MCF 10A (cell line): ENCODE measurements at regions of chr1 and their contacts with region 1.

Region 1: DNA sequence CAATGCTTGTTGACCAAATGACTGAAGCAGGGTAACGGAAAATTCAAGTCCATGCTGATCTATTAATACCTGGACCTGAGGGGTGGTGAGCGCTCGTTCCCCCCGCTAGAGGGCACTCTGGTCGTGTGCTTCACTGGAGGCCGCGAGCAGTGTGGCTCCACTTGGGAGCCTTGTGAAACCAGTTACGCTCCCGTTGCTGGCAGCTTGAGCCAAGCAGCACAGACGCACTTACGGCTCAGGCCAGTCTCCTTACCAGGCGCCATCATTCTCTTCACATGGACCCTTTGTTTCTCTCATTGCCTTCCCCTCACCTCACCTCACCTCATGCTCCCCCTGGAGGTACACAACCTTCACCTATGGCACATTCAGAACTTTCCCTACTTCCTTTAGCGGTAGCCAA is 49.7 kb upstream of the TSPAN2 start:
- DNase-seq: peak; percentile 90
- H3K4me3 Mint-ChIP-seq: no peak overlapping the region
- H3K27ac Mint-ChIP-seq: no peak overlapping the region
- H3K4me1 Mint-ChIP-seq: peaks cover 38% of the 10 kb centered on the region
- H3K27me3 Mint-ChIP-seq: no peaks in the 10 kb centered on the region
- CTCF ChIP-seq: peak; percentile 86

Region 2: DNA sequence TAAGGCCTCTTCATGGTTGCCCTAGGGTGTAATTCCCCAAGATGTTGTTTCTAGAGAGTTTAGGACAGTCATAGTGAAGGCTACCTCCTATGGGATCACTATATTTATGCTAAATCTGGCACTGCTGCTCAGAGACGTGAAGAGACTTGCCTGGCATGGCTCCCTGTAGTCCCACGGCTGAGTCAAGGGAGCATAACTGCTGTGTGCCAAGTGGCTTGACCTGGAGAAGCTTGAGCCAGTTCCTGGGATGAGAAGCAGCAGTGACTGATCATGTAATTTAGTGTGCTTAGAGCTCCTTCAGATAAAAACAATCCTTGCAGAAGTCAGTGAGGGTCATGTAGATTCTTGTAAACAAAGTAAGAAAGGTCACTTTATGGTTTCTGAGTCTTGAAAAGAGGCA is 19.2 kb after region 1 on chr1:
- CTCF ChIA-PET with region 1: interaction called, 27 read pairs
- POLR2A ChIA-PET with region 1: interaction called, 10 read pairs
- intact Hi-C with region 1: no loop called
- DNase-seq: peak; percentile 91
- H3K4me3 Mint-ChIP-seq: no peak overlapping the region
- H3K27ac Mint-ChIP-seq: peak overlapping the region; percentile 64
- H3K4me1 Mint-ChIP-seq: peaks cover 22% of the 10 kb centered on the region
- H3K27me3 Mint-ChIP-seq: no peaks in the 10 kb centered on the region
- CTCF ChIP-seq: no peak

Region 3: DNA sequence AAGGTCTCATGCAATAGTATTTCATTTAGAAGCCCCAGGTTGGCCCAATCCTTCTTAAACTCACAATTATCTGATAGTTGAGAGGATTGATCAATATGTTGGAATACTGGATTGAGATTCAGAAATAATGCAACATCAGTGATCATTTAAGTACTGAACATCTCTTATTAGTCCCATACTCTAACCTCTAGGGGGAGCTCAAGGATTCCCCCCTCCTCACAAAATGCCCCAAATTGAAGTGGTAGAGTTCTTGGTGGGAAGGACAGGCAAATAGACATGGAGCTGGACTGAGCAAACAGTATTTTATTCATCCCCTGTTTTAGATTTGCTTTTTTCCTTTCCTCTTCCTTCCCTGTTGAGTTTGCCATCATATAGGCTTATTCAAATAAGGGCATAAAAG is 136.2 kb after region 1 on chr1:
- CTCF ChIA-PET with region 1: interaction called, 9 read pairs
- POLR2A ChIA-PET with region 1: no interaction called
- intact Hi-C with region 1: loop called (anchors 1 kb)
- DNase-seq: peak; percentile 48
- H3K4me3 Mint-ChIP-seq: no peak overlapping the region
- H3K27ac Mint-ChIP-seq: no peak overlapping the region
- H3K4me1 Mint-ChIP-seq: no peaks in the 10 kb centered on the region
- H3K27me3 Mint-ChIP-seq: no peaks in the 10 kb centered on the region
- CTCF ChIP-seq: peak; percentile 54

Region 4: DNA sequence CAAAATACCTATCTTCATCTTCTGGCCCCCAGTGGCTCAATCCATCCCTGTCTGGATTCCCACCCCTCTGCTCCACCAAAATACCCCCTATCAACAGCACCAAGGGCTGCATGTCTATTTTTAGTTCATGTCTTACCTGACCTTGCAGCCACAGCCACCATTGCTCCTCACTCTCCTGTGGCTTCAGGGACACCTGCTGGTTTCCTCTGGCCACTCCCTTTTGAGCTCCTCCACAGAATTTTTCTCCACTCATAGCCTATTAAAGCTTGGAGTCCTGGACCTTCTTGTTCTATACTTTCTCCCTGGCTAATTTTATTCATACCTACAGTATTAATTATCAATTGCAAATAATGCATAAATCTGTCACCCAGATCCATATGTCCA is 324.4 kb after region 1 on chr1:
- CTCF ChIA-PET with region 1: interaction called, 382 read pairs
- POLR2A ChIA-PET with region 1: interaction called, 4 read pairs
- intact Hi-C with region 1: loop called (anchors 1 kb)
- DNase-seq: peak; percentile 40
- H3K4me3 Mint-ChIP-seq: no peak overlapping the region
- H3K27ac Mint-ChIP-seq: no peak overlapping the region
- H3K4me1 Mint-ChIP-seq: no peaks in the 10 kb centered on the region
- H3K27me3 Mint-ChIP-seq: no peaks in the 10 kb centered on the region
- CTCF ChIP-seq: peak; percentile 42

Region 5: DNA sequence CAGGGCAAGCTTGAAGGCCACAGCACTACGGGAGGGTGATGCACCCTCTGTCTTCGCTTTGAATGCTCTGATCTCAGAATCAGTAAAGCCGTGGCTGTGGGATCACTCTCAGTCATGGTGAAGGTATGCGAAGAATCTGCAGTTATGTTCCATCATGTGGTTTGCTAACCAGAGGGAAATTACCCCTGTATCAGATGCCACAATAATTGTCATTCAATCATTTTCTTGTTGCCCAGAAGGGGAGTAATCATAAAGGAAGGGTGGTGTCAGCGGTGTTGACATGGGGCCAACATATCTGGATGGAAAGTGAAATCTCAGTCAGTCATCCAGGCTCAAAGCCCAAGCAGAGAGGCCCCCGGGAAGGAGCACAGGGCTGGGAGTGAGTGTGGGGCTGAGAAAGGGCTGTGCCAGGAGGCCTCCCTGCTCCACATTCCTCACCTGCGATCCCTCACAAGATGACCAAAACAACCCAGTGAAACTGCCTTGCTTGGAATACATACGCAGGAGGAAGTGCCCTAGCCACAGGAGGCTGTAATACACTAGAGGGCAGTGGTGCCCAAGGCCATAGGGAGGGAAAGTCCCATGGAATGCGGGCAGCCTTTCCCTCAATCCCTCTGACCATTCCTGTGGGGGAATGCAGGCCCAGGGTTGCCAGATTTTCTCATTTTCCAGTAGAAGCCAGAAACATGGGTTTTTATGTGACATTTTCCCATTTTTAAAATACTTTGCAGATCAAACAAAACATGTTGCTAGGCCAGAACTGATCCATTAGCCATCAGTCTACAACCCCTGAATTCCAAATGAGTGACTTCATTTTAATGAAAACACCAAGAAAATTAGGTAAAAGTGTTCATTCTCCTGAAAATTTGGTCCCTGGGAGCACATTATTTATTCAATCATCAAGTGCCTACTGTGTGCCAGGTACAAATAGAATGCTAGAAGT is 407.1 kb after region 1 on chr1:
- CTCF ChIA-PET with region 1: no interaction called
- POLR2A ChIA-PET with region 1: no interaction called
- intact Hi-C with region 1: loop called (anchors 1 kb)
- DNase-seq: peak; percentile 84
- H3K4me3 Mint-ChIP-seq: peak overlapping the region; percentile 57
- H3K27ac Mint-ChIP-seq: peak overlapping the region; percentile 92
- H3K4me1 Mint-ChIP-seq: peaks cover 15% of the 10 kb centered on the region
- H3K27me3 Mint-ChIP-seq: no peaks in the 10 kb centered on the region
- CTCF ChIP-seq: peak; percentile 61

Region 6: GRCh38 chr1:115771847-115772457 is 633.0 kb after region 1 on chr1:
- CTCF ChIA-PET with region 1: interaction called, 6 read pairs
- POLR2A ChIA-PET with region 1: no interaction called
- intact Hi-C with region 1: loop called (anchors 5 kb)
- DNase-seq: peak; percentile 94
- H3K4me3 Mint-ChIP-seq: no peak overlapping the region
- H3K27ac Mint-ChIP-seq: peak overlapping the region; percentile 49
- H3K4me1 Mint-ChIP-seq: peaks cover 16% of the 10 kb centered on the region
- H3K27me3 Mint-ChIP-seq: no peaks in the 10 kb centered on the region
- CTCF ChIP-seq: peak; percentile 70